Naive thymus-derived CD4-positive, alpha-beta T cell (primary cell): ENCODE measurements at regions of chr15 and their contacts with region 1.

Region 1: GRCh38 chr15:69468241-69469121 is 15.9 kb downstream of the RPLP1 start:
- DNase-seq: peak; percentile 49 to 92 (median 84)
- ATAC-seq: peak; percentile 95
- H3K4me3 ChIP-seq: peak overlapping the region; percentile 3
- H3K4me3 Mint-ChIP-seq: peak overlapping the region; percentile 46 to 78 (median 63)
- H3K27ac ChIP-seq: peak overlapping the region; percentile 82
- H3K27ac Mint-ChIP-seq: peak overlapping the region; percentile 86 to 98 (median 94)
- H3K4me1 ChIP-seq: peaks cover 22 to 27% of the 10 kb centered on the region in 2 donors
- H3K4me1 Mint-ChIP-seq: peaks cover 17 to 36% (median 22%) of the 10 kb centered on the region in 7 donors
- H3K27me3 ChIP-seq: no peaks in the 10 kb centered on the region
- H3K27me3 Mint-ChIP-seq: peaks cover 0 to 32% (median 0%) of the 10 kb centered on the region in 5 donors

Region 2: DNA sequence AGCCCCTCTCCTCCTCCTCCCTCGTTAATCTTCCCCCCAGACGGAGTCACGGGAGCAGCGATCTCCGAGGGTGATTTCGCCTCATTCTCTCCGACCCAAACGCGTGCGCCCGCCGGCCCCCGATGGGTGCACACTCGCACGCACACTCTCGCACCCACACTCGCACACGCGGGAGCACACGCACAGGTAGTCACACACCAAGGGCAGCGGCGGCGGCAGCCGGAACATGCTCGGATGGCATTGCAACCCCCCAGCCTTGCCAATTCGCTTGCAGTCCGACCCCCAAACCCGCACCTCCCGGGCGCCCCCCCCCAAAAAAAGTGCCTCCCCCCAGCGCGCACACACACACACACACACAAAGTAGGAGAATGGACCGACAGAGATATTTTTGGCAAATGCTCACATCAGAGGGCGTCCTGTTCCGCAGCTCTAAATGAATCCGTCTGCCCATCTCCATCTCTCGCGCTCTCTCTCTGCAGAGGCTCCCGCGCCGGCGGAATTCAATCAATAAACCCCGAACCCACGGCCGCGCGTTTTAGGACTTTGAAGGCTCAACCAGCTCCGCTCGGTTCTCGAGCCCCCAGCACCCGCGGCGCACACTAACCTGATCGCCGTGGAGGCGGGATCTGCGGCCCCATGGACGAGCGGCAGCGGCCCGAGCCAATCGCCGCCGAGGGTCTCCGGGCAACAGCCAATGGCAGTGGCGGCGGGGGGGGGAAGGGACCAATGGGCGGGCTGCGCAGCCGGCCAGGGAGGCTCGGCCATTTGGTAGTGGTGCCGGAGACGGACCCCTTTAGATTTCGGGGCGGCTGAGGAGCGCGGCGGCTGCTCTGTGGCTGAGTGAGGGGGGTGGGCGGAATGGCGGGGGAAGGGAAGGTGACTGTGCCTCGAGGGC is 647.9 kb before region 1 on chr15 and contains the start of gene ANP32A:
- CTCF ChIA-PET with region 1: no interaction called
- POLR2A ChIA-PET with region 1: no interaction called
- intact Hi-C with region 1: loop called in 1 of 2 experiments (anchors 5 kb)
- DNase-seq: peak; percentile 90 to 99 (median 95)
- ATAC-seq: peak; percentile 85
- H3K4me3 ChIP-seq: peak within 1 kb of the TSS; percentile 99
- H3K4me3 Mint-ChIP-seq: peak within 1 kb of the TSS; percentile 85 to 100 (median 92)
- H3K27ac ChIP-seq: peak within 1 kb of the TSS; percentile 91
- H3K27ac Mint-ChIP-seq: peak within 1 kb of the TSS; percentile 84 to 100 (median 92)
- H3K4me1 ChIP-seq: peaks cover 19 to 23% of the 10 kb centered on the region in 2 donors
- H3K4me1 Mint-ChIP-seq: peaks cover 22 to 37% (median 34%) of the 10 kb centered on the region in 7 donors
- H3K27me3 ChIP-seq: no peaks in the 10 kb centered on the region
- H3K27me3 Mint-ChIP-seq: no peaks in the 10 kb centered on the region
- total RNA-seq, gene ANP32A: 86.1 to 229 (median 136) TPM

Region 3: DNA sequence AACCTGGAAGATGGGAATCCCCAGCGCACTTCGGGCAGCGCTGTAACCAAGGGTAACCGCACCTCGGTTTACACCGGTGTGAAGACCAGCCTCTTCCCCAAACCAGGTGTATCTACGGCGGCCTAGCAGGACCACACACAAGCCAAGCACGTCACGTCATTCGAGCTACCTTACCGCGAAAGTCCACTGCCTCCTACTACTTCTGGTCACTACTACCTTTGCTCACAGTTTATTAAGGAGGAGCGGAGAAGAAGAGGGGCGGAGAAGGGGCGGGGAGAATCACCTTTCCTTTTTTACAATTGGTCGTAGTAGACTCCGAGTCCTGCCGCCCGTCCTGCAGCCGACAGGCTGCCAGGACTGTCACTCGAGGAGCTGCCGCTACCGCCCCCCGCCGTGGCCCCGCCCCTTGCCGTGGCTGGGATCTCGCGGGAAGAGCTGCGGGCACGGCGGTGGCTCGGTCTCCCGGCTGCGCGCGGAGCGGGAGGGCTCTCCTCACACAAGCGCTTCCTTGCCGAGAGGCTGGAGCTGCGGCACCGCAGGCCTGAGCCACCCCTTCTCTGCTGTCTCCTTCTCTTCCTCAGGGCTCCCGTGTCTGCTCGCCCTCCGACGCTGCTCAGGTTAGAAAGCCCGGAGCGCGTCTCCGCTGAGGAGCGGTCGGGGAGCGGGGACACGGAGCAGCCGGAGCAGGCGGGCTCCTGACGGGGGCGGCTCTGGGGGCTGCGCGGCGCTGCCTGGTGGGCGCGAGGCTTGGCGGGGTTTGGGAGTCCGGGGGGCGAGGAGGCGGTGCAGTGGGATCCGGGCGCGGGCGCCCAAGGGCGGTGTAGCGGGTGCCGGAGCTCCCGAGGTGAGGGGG is 308.1 kb before region 1 on chr15 and contains the start of gene GLCE:
- CTCF ChIA-PET with region 1: no interaction called
- POLR2A ChIA-PET with region 1: no interaction called
- intact Hi-C with region 1: loop called in 1 of 2 experiments (anchors 2 kb)
- DNase-seq: peak; percentile 89 to 96 (median 94)
- ATAC-seq: peak; percentile 97
- H3K4me3 ChIP-seq: peak within 1 kb of the TSS; percentile 92
- H3K4me3 Mint-ChIP-seq: peak within 1 kb of the TSS; percentile 90 to 100 (median 97)
- H3K27ac ChIP-seq: peak within 1 kb of the TSS; percentile 76
- H3K27ac Mint-ChIP-seq: peak within 1 kb of the TSS; percentile 76 to 98 (median 90)
- H3K4me1 ChIP-seq: peaks cover 5 to 7% of the 10 kb centered on the region in 2 donors
- H3K4me1 Mint-ChIP-seq: peaks cover 12 to 22% (median 18%) of the 10 kb centered on the region in 7 donors
- H3K27me3 ChIP-seq: no peaks in the 10 kb centered on the region
- H3K27me3 Mint-ChIP-seq: peaks cover 0 to 44% (median 4%) of the 10 kb centered on the region in 5 donors
- total RNA-seq, gene GLCE: 3.0 to 6.1 (median 5.4) TPM

Region 4: DNA sequence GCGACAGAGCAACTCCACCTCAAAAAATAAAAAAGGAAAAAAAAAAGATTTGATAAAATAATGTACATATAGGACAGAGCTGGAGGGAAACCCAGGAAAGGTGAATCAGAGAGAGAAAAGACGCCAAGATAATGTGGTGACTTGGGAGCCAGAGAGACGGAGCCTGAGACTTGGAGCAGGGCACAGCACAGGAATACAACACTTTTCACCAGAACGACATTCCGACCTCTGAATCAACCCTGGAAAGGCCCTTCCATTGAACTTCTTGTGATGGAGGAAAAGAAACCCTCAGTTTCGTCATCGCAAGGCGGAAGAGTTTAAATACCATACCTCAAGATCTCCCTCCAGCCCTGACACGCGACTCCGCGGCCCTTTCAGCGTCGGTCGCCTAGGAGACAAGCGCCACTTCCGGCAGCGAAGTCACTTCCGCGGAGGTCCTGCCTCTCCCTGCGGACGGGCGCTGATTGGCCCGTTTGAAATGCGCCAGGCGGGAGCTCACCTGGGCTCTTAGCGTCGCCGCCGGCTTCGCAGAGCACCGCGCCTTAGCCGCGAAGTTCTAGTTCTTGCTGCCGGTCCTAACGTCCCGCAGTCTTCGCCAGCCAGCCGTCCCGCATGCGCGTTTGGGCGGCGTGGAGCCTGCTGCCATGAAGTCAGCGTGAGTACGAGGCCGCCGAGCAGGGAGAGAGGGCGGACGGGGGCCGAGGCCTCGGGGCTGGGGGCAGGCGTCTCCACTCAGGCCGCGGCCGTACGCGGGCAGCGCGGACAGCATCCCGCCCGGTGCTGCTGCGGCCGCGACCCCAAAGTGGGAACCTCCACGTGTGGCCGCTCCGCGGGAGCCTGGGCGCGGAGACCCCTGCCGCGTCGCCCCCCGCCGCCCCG is 54.4 kb before region 1 on chr15 and contains the start of gene KIF23:
- CTCF ChIA-PET with region 1: interaction called, 3 read pairs
- POLR2A ChIA-PET with region 1: interaction called, 3 read pairs
- intact Hi-C with region 1: loop called in 1 of 2 experiments (anchors 1 kb)
- DNase-seq: peak; percentile 84 to 93 (median 90)
- ATAC-seq: peak; percentile 98
- H3K4me3 ChIP-seq: peak within 1 kb of the TSS; percentile 66
- H3K4me3 Mint-ChIP-seq: peak within 1 kb of the TSS; percentile 81 to 88 (median 86)
- H3K27ac ChIP-seq: no peak within 1 kb of the TSS
- H3K27ac Mint-ChIP-seq: peak within 1 kb of the TSS in 7 of 9 donors; percentile 34 to 86 (median 78)
- H3K4me1 ChIP-seq: peaks cover 0 to 4% of the 10 kb centered on the region in 2 donors
- H3K4me1 Mint-ChIP-seq: peaks cover 0 to 36% (median 7%) of the 10 kb centered on the region in 7 donors
- H3K27me3 ChIP-seq: peaks cover 0 to 9% of the 10 kb centered on the region in 2 donors
- H3K27me3 Mint-ChIP-seq: peaks cover 8 to 22% (median 10%) of the 10 kb centered on the region in 5 donors
- total RNA-seq, gene KIF23: 0.30 to 39.4 (median 0.72) TPM in 4 of 5 experiments, not detected in the other

Region 5: GRCh38 chr15:69713726-69714559 is 245.5 kb after region 1 on chr15:
- CTCF ChIA-PET with region 1: no interaction called
- POLR2A ChIA-PET with region 1: no interaction called
- intact Hi-C with region 1: loop called (anchors 5 kb)
- DNase-seq: peak in 8 of 9 donors; percentile 60 to 80 (median 70)
- ATAC-seq: peak; percentile 88
- H3K4me3 ChIP-seq: no peak overlapping the region
- H3K4me3 Mint-ChIP-seq: peak overlapping the region; percentile 52 to 80 (median 72)
- H3K27ac ChIP-seq: no peak overlapping the region
- H3K27ac Mint-ChIP-seq: peak overlapping the region; percentile 71 to 90 (median 78)
- H3K4me1 ChIP-seq: peaks cover 32 to 50% of the 10 kb centered on the region in 2 donors
- H3K4me1 Mint-ChIP-seq: peaks cover 31 to 63% (median 54%) of the 10 kb centered on the region in 7 donors
- H3K27me3 ChIP-seq: no peaks in the 10 kb centered on the region
- H3K27me3 Mint-ChIP-seq: peaks cover 0 to 22% (median 0%) of the 10 kb centered on the region in 5 donors

Region 6: GRCh38 chr15:70480196-70480856 is 1011.8 kb after region 1 on chr15:
- CTCF ChIA-PET with region 1: no interaction called
- POLR2A ChIA-PET with region 1: no interaction called
- intact Hi-C with region 1: loop called in 1 of 2 experiments (anchors 1 kb)
- DNase-seq: peak in 2 of 9 donors; percentile 17 to 73
- ATAC-seq: peak; percentile 88
- H3K4me3 ChIP-seq: no peak overlapping the region
- H3K4me3 Mint-ChIP-seq: peak overlapping the region in 7 of 10 donors; percentile 8 to 73 (median 38)
- H3K27ac ChIP-seq: no peak overlapping the region
- H3K27ac Mint-ChIP-seq: peak overlapping the region in 3 of 9 donors; percentile 21 to 71 (median 49)
- H3K4me1 ChIP-seq: peaks cover 29 to 32% of the 10 kb centered on the region in 2 donors
- H3K4me1 Mint-ChIP-seq: peaks cover 27 to 73% (median 39%) of the 10 kb centered on the region in 7 donors
- H3K27me3 ChIP-seq: no peaks in the 10 kb centered on the region
- H3K27me3 Mint-ChIP-seq: peaks cover 0 to 61% (median 15%) of the 10 kb centered on the region in 5 donors

Region 7: DNA sequence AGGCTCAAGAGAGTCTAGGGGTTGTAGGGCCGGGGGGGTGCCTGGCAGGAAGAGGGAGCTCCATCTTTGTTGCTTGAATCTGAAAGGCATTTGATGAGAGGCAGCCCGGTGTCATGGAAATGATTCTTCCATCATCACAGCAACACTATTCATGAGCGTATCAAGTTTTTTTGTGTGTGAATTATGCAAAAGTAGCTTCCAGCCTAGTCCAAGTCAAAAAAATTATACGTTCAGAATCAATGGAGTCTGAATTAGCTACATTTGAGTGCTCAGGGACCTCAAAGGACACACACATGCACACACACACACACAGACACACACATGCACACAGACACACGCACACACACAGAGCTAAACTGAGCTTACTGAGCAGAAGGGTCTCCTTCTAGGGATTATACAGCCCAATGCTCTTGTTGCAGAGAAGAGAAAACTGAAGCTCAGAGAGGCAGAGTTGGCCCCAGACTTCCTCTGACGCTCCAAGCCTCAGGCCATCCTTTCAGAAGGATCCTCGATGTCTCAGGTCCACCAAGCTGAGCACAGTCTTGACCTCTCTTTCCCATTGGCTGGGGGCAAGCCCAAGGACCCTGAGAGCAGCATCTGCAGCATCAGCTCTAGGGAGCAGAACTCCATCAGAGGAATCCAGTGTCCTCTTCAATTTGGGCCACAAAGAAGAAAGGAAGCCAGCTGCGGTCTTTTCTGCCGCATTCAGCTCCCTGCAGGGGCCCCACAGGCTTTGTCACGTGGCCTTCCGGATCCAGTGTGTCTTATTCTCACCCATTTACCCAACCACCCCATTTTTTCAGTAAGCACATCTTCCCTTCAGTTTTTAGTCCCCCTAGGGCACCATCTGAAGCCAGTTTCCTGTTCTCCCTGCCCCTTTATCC is 1066.8 kb after region 1 on chr15:
- CTCF ChIA-PET with region 1: no interaction called
- POLR2A ChIA-PET with region 1: interaction called, 3 read pairs
- intact Hi-C with region 1: loop called in 1 of 2 experiments (anchors 2 kb)
- DNase-seq: peak; percentile 35 to 82 (median 77)
- ATAC-seq: peak; percentile 86
- H3K4me3 ChIP-seq: peak overlapping the region; percentile 66
- H3K4me3 Mint-ChIP-seq: peak overlapping the region; percentile 83 to 99 (median 92)
- H3K27ac ChIP-seq: peak overlapping the region; percentile 74
- H3K27ac Mint-ChIP-seq: peak overlapping the region; percentile 87 to 97 (median 95)
- H3K4me1 ChIP-seq: peaks cover 33 to 50% of the 10 kb centered on the region in 2 donors
- H3K4me1 Mint-ChIP-seq: peaks cover 44 to 87% (median 75%) of the 10 kb centered on the region in 7 donors
- H3K27me3 ChIP-seq: no peaks in the 10 kb centered on the region
- H3K27me3 Mint-ChIP-seq: peaks cover 0 to 23% (median 0%) of the 10 kb centered on the region in 5 donors